HCT116 (cell line): ENCODE measurements at regions of chr3 and their contacts with region 1.

Region 1: GRCh38 chr3:4907643-4908432 is 71.4 kb upstream of the BHLHE40 start:
- DNase-seq: no peak
- ATAC-seq: no peak
- H3K4me3 ChIP-seq: no peak overlapping the region
- H3K27ac ChIP-seq: no peak overlapping the region
- H3K4me1 ChIP-seq: 0 out of 4 replicates have a peak, but pooled peaks cover 0 to 4% of the 10 kb centered on the region in 2 experiments
- H3K27me3 ChIP-seq: no peaks in the 10 kb centered on the region
- CTCF ChIP-seq: no peak
- POLR2A ChIP-seq: no peak
- RAD21 ChIP-seq: no peak

Region 2: DNA sequence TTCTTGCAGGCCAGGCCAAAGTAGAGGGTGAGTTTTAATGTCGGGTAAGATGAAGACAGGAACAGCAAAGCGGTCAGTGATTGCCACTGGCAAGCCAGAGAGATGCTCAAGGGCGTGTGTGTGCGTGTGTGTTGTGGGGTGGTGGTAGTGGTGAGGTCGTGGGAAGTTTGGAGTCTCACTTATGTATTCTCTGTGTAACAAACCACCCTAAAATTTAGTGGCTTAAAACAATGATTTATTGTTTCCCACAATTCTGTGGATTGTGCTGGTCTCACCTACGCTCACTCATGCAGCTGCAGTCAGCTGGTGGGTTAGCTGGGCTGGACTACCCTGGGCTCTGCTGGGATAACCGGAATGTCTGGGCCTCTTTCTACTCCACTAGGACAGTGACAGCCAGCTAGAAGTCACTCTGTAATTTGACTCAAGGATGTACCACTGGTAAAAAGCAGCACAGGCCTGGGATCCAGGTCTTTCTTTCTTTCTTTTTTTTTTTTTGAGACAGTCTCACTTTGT is 20.5 kb after region 1 on chr3:
- CTCF ChIA-PET with region 1: no interaction called
- POLR2A ChIA-PET with region 1: no interaction called
- RAD21 ChIA-PET with region 1: no interaction called
- intact Hi-C with region 1: loop called (anchors 2 kb)
- DNase-seq: no peak
- ATAC-seq: no peak
- H3K4me3 ChIP-seq: no peak overlapping the region
- H3K27ac ChIP-seq: no peak overlapping the region
- H3K4me1 ChIP-seq: no peaks in the 10 kb centered on the region
- H3K27me3 ChIP-seq: no peaks in the 10 kb centered on the region
- CTCF ChIP-seq: no peak
- POLR2A ChIP-seq: no peak
- RAD21 ChIP-seq: no peak